ENCODE measurements at regions of chr14 and their contacts with region 1.

Region 1: GRCh38 chr14:20855652-20856291 is 35.4 kb upstream of the RNASE3 start:
- DNase-seq: peak in 11 of 14 experiments; percentile 8 to 79 (median 25)
- ATAC-seq: peak; percentile 92
- H3K4me3 ChIP-seq: no peak overlapping the region
- H3K4me3 Mint-ChIP-seq: no peak overlapping the region
- H3K27ac ChIP-seq: no peak overlapping the region
- H3K27ac Mint-ChIP-seq: no peak overlapping the region
- H3K4me1 ChIP-seq: no peaks in the 10 kb centered on the region
- H3K4me1 Mint-ChIP-seq: no peaks in the 10 kb centered on the region
- H3K27me3 ChIP-seq: peaks cover 0 to 6% of the 10 kb centered on the region in 2 experiments
- H3K27me3 Mint-ChIP-seq: peaks cover 25% of the 10 kb centered on the region
- CTCF ChIP-seq: peak; percentile 67

Region 2: GRCh38 chr14:20332788-20333493 is 522.8 kb before region 1 on chr14 and contains the start of gene CCNB1IP1:
- CTCF ChIA-PET with region 1: no interaction called
- POLR2A ChIA-PET with region 1: no interaction called
- intact Hi-C with region 1: loop called in 1 of 2 experiments (anchors 10 kb)
- DNase-seq: peak in 13 of 14 experiments; percentile 5 to 91 (median 26)
- ATAC-seq: peak; percentile 99
- H3K4me3 ChIP-seq: peak within 1 kb of the TSS; percentile 75
- H3K4me3 Mint-ChIP-seq: peak within 1 kb of the TSS; percentile 94
- H3K27ac ChIP-seq: peak within 1 kb of the TSS; percentile 3 to 59
- H3K27ac Mint-ChIP-seq: peak within 1 kb of the TSS; percentile 84
- H3K4me1 ChIP-seq: peaks cover 12% of the 10 kb centered on the region
- H3K4me1 Mint-ChIP-seq: peaks cover 34% of the 10 kb centered on the region
- H3K27me3 ChIP-seq: no peaks in the 10 kb centered on the region
- H3K27me3 Mint-ChIP-seq: no peaks in the 10 kb centered on the region
- CTCF ChIP-seq: no peak
- total RNA-seq, gene CCNB1IP1: 26.2 to 27.4 TPM

Region 3: GRCh38 chr14:20697273-20698017 is 158.3 kb before region 1 on chr14:
- CTCF ChIA-PET with region 1: interaction called, 4 read pairs
- POLR2A ChIA-PET with region 1: interaction called, 3 read pairs
- intact Hi-C with region 1: loop called (anchors 1 kb)
- DNase-seq: peak; percentile 42 to 83 (median 56)
- ATAC-seq: peak; percentile 80
- H3K4me3 ChIP-seq: no peak overlapping the region
- H3K4me3 Mint-ChIP-seq: no peak overlapping the region
- H3K27ac ChIP-seq: no peak overlapping the region
- H3K27ac Mint-ChIP-seq: no peak overlapping the region
- H3K4me1 ChIP-seq: no peaks in the 10 kb centered on the region
- H3K4me1 Mint-ChIP-seq: no peaks in the 10 kb centered on the region
- H3K27me3 ChIP-seq: no peaks in the 10 kb centered on the region
- H3K27me3 Mint-ChIP-seq: no peaks in the 10 kb centered on the region
- CTCF ChIP-seq: peak; percentile 78

Region 4: DNA sequence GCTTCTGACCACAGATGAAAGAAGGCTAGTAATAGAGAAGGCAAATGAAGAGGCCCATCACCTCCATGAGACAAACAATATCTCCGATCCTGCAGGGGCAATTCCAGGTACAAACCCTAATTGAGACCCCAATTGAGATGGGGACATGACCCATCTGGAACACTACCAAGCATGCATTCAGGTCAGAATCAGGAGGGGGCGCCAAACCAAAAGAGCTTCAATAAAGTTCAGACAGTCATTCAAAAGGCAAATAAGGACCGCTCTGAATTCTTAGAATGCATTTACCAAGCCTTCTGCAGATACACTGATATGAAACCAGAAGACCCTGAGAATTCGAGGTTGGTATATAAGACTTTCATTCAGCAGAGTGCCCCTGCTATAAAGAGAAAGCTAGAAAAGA is 97.8 kb before region 1 on chr14:
- CTCF ChIA-PET with region 1: no interaction called
- POLR2A ChIA-PET with region 1: no interaction called
- intact Hi-C with region 1: loop called in 1 of 2 experiments (anchors 2 kb)
- DNase-seq: peak in 12 of 14 experiments; percentile 4 to 57 (median 22)
- ATAC-seq: no peak
- H3K4me3 ChIP-seq: no peak overlapping the region
- H3K4me3 Mint-ChIP-seq: no peak overlapping the region
- H3K27ac ChIP-seq: no peak overlapping the region
- H3K27ac Mint-ChIP-seq: no peak overlapping the region
- H3K4me1 ChIP-seq: no peaks in the 10 kb centered on the region
- H3K4me1 Mint-ChIP-seq: no peaks in the 10 kb centered on the region
- H3K27me3 ChIP-seq: peaks cover 0 to 4% of the 10 kb centered on the region in 2 experiments
- H3K27me3 Mint-ChIP-seq: no peaks in the 10 kb centered on the region
- CTCF ChIP-seq: peak; percentile 39

Region 5: DNA sequence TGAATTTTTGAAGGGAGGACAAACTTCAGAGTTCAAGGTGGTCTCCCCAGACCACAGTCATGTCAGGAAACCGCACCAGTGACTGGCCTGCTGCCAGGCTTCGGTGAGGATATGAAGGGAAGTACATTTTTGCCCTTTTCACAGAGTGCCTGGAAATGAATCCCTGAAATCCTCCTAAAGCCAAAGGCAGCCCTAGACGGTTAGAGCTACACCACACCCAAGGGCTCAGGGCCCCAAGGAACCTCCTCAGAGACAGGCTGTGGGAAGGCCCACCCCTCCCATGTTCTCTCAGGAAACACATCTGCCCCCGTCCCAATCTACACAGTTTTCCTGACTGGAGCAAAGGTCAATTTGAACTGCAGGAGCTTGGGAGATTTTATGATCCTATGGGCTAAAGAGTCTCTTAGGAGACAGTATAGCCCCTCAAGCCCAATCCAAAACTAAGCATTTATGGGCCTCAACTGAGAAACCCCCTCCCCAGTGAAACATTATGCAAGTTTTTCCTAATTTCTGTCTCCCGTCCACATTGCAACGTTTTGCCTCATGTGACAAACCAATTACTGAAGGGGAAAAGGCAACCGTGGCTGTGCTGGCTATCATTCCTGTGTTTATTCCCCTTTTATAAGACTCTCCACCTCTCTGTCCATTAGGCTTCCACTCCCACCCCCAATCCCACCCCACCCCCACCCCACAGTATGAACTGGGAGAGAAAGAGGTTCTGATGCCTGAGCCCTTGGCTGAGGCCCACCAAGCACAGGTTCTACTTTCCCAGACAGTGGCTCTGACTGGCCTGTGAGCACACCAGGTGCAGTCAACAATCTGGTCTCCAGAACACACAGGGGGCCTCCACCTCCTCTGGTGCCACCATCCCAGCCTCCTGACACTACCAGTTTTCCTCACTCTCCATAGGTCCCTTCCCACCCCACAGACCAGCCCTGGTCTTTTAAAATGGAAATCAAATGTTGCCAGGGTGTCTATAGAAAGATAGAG is 43.5 kb before region 1 on chr14:
- CTCF ChIA-PET with region 1: no interaction called
- POLR2A ChIA-PET with region 1: no interaction called
- intact Hi-C with region 1: no loop called
- DNase-seq: no peak
- ATAC-seq: no peak
- H3K4me3 ChIP-seq: no peak overlapping the region
- H3K4me3 Mint-ChIP-seq: no peak overlapping the region
- H3K27ac ChIP-seq: no peak overlapping the region
- H3K27ac Mint-ChIP-seq: no peak overlapping the region
- H3K4me1 ChIP-seq: no peaks in the 10 kb centered on the region
- H3K4me1 Mint-ChIP-seq: no peaks in the 10 kb centered on the region
- H3K27me3 ChIP-seq: no peaks in the 10 kb centered on the region
- H3K27me3 Mint-ChIP-seq: peaks cover 5% of the 10 kb centered on the region
- CTCF ChIP-seq: no peak

Region 6: DNA sequence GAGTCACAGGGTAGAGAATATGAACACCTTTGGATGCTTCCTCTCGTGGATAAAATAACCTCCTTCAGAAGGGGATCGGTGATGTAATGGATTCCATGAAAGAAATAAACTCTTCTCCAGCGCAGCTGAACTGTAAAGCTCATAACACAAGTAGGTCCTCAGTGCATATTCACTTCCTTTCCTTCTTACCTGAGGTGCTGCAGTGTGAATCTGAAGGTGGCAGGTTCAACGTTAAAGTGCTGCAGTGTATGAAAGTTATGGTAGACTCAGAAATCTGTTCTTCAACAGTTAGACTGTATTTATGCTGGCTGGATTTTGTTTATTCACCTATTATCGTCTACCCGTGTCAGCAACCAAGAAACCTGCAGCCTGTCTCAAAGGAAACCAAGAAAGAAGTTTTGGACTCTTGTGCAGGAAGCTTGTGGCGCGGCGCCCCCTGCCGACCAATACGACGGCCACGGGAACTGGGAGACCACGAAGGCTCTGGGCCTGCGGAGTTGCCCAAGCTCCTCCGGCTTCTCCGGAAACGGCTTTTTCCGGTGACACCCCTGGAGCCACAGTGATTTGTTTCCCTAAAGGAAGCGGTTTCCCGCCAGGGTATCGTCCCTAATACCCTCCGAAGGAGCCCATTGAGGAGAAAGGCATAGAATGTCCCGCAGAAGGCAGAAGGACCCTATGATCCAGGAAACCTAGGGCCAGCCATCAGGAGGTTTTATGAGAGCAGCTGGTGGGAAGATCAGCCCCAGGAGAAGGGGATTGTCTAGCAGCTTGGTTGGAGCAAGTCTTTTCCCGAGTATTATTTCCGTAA is 17.8 kb after region 1 on chr14:
- CTCF ChIA-PET with region 1: interaction called, 15 read pairs
- POLR2A ChIA-PET with region 1: interaction called, 3 read pairs
- intact Hi-C with region 1: loop called in 1 of 2 experiments (anchors 2 kb)
- DNase-seq: peak; percentile 57 to 85 (median 70)
- ATAC-seq: peak; percentile 71
- H3K4me3 ChIP-seq: no peak overlapping the region
- H3K4me3 Mint-ChIP-seq: no peak overlapping the region
- H3K27ac ChIP-seq: no peak overlapping the region
- H3K27ac Mint-ChIP-seq: no peak overlapping the region
- H3K4me1 ChIP-seq: peaks cover 10% of the 10 kb centered on the region
- H3K4me1 Mint-ChIP-seq: peaks cover 15% of the 10 kb centered on the region
- H3K27me3 ChIP-seq: peaks cover 0 to 6% of the 10 kb centered on the region in 2 experiments
- H3K27me3 Mint-ChIP-seq: peaks cover 4% of the 10 kb centered on the region
- CTCF ChIP-seq: peak; percentile 76

Region 7: GRCh38 chr14:21168055-21168454 is 312.3 kb after region 1 on chr14:
- CTCF ChIA-PET with region 1: no interaction called
- POLR2A ChIA-PET with region 1: no interaction called
- intact Hi-C with region 1: no loop called
- DNase-seq: no peak
- ATAC-seq: no peak
- H3K4me3 ChIP-seq: no peak overlapping the region
- H3K4me3 Mint-ChIP-seq: no peak overlapping the region
- H3K27ac ChIP-seq: no peak overlapping the region
- H3K27ac Mint-ChIP-seq: no peak overlapping the region
- H3K4me1 ChIP-seq: no peaks in the 10 kb centered on the region
- H3K4me1 Mint-ChIP-seq: no peaks in the 10 kb centered on the region
- H3K27me3 ChIP-seq: peaks cover 9 to 12% of the 10 kb centered on the region in 2 experiments
- H3K27me3 Mint-ChIP-seq: peaks cover 14% of the 10 kb centered on the region
- CTCF ChIP-seq: no peak